ENCODE measurements at regions of chr19 and their contacts with region 1.

Region 1: DNA sequence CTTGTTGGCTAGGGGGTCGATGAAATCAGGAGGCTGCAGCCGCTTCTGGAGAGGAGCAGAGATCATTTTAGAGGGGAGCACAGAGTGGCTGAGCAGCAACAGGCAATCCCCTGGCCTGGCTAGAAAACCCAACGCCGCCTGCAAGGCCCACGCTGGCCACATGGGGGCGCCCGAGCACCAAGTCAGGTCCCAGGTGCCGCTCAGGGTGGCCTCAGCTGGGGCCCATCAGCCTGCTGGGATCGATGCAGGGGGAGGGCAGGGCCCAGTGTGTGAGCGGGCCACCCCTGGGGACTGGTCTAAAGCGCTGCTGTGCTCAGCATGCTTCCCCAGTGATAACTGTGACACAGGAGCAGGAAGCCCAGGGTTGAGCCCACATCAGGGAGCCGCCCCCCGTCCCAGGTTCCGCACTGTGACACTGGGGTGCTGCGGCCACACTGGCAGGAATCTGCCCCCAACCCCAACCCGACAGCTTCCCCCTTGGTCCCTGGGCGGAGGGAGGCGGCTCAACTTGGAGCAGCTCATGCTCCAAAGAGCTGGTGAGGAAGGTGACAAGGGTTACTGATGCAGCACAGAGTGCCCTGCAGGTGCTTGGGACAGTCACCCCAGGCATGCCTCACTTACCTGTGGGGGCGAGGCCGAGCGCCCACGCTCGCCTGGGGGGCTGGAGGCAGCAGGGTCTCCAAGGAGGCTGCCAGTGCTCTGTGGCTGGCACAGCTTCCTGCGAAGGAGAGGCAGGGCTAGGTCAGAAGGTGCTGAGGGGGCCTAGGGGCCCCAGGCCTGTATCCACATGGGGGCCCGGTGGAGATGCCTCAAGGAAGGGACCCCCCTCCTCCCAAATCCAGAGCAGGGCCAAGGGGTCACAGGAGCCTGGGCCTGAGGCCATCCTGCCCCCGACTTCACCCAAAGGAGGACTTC is 13.3 kb upstream of the ISYNA1 start:
- DNase-seq: peak; percentile 92
- ATAC-seq: peak; percentile 89

Region 2: GRCh38 chr19:18675779-18676178 is 224.6 kb after region 1 on chr19:
- intact Hi-C with region 1: loop called (anchors 10 kb)
- DNase-seq: no peak
- ATAC-seq: no peak

Region 3: DNA sequence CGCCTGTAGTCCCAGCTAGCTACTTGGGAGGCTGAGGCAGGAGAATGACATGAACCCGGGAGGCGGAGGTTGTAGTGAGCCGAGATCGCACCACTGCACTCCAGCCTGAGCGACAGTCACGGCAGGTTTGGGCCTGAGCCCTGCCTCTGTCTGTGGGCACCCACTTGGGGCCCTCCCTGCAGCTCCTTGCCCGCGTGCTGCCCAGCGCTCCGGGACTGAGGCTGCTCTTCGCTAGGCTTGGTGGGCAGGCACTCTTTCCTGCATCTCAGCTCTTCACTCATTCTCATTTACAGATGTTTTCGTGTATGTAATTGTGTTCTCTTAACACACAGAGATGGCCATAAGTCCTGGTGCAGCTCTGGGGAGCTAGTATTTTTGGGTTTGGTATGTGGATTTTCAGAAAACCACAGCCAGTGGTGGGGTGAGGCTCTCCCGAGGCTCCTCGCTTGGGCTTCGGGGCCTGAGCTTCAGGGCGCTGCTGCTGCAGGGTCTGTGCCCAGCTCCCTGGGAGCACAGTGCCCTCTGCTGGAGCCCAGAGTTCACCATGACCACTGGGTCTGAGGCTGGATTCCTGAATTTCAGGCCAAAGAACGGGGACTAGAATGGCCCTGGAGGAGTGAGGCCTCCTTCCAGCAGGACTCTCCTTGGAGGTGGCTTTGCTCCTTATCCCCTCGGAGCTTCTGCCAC is 395.8 kb after region 1 on chr19:
- intact Hi-C with region 1: loop called (anchors 5 kb)
- DNase-seq: peak; percentile 90
- ATAC-seq: peak; percentile 77

Region 4: GRCh38 chr19:18919086-18919899 is 468.1 kb after region 1 on chr19 and contains the starts of genes COPE and DDX49:
- intact Hi-C with region 1: loop called (anchors 10 kb)
- DNase-seq: peak; percentile 98
- ATAC-seq: peak; percentile 99
- total RNA-seq, gene COPE: 139 TPM
- total RNA-seq, gene DDX49: 25.6 TPM